ENCODE measurements at regions of chr6 and their contacts with region 1.

Region 1: GRCh38 chr6:41066867-41067304 is 5.3 kb downstream of the OARD1 start:
- DNase-seq: peak; percentile 81
- ATAC-seq: peak; percentile 23
- H3K4me3 ChIP-seq: no peak overlapping the region
- H3K27ac ChIP-seq: no peak overlapping the region
- H3K4me1 ChIP-seq: peaks cover 10% of the 10 kb centered on the region
- H3K27me3 ChIP-seq: no peaks in the 10 kb centered on the region
- CTCF ChIP-seq: peak; percentile 90

Region 2: DNA sequence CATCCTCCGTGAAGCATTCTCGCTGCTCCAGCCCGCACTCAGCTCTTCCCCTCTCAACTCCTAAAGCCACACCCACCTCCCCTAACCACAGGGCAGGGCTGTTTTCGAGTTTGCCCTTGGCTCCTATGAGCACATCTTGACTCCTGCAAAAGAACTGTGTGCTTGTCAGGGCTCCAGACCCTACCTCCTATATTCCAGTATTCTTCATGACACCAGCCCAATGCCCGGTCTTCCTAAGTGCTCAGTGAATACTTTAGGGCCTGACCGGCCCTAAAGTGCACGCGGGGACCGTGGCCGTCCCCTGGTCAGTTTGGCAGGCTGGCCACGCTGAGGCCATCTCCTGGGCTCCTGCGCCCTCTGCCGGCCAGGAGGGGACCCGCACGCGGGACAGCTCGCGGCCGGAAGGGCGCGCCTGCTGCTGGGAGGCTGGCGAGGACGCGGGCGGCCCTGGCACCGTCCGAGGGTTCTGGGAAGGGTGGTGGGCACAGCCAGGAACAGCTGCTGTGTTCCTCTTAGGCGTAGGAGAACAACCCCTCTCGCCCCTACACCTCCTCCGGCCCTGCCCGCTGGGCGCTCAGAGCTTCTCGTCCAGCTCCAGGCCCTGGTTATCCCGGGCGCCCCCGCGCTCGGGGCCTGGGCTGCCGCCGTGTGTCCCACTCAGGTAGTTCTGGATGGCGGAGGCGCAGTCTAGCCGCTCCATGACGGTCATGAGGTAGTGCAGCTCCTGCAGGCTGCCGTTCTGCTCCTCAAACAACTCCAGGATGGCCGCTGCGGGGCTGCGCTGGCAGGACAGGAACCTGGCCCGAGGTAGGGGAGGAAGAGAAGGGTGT is 38.9 kb before region 1 on chr6:
- CTCF ChIA-PET with region 1: no interaction called
- POLR2A ChIA-PET with region 1: no interaction called
- intact Hi-C with region 1: loop called (anchors 2 kb)
- DNase-seq: peak; percentile 87
- ATAC-seq: peak; percentile 84
- H3K4me3 ChIP-seq: peak overlapping the region; percentile 69
- H3K27ac ChIP-seq: peak overlapping the region; percentile 31; the same call in 1 of the 2 replicates
- H3K4me1 ChIP-seq: peaks cover 28% of the 10 kb centered on the region
- H3K27me3 ChIP-seq: no peaks in the 10 kb centered on the region
- CTCF ChIP-seq: peak; percentile 98

Region 3: GRCh38 chr6:41080621-41081020 is 13.7 kb after region 1 on chr6:
- CTCF ChIA-PET with region 1: no interaction called
- POLR2A ChIA-PET with region 1: no interaction called
- intact Hi-C with region 1: no loop called
- DNase-seq: no peak
- ATAC-seq: no peak
- H3K4me3 ChIP-seq: no peak overlapping the region
- H3K27ac ChIP-seq: no peak overlapping the region
- H3K4me1 ChIP-seq: peaks cover 19% of the 10 kb centered on the region; the same call in 1 of the 2 replicates
- H3K27me3 ChIP-seq: no peaks in the 10 kb centered on the region
- CTCF ChIP-seq: no peak

Region 4: DNA sequence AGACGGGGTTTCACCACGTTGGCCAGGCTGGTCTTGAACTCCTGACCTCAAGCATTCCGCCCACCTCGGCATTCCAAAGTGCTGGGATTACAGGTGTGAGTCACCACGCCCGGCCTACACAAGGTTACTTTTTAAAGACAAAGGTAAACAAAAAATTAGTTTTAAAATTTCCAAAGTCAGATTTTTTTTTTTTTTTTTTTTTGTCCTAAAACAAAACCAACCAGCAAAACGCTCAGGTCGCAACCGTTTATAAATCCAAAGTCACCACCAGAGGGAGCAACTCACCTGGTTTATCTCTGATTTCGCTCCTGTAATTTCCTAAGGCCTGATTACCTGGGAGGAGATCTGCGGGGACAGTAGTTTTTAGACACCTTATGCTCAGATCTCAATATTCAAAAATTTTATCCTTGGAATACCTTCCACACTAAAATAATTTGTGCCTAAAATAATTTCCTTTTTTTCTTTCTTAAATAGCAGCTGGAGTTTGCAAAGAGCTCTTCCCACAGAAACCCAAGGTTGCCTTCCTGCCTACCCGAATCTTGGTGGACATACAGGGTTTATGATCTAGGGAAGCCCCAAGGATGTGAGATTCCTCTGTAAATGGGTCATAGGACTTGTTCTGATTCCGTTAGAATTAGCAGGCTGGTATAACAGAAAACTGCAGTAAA is 239.4 kb after region 1 on chr6:
- CTCF ChIA-PET with region 1: no interaction called
- POLR2A ChIA-PET with region 1: no interaction called
- intact Hi-C with region 1: no loop called
- DNase-seq: peak; percentile 82
- ATAC-seq: peak; percentile 53; the same call in 1 of the 2 replicates
- H3K4me3 ChIP-seq: no peak overlapping the region
- H3K27ac ChIP-seq: no peak overlapping the region
- H3K4me1 ChIP-seq: 0 out of 2 replicates have a peak, but pooled peaks cover 4% of the 10 kb centered on the region
- H3K27me3 ChIP-seq: peaks cover 10% of the 10 kb centered on the region; the same call in 1 of the 2 replicates
- CTCF ChIP-seq: peak; percentile 76

Measured in PC-3 (cell line).